Activated CD4-positive, alpha-beta T cell treated with anti-CD3 and anti-CD28 coated beads, Interleukin-2, amount 10 ng/mL, durations not matched to agents 24 days and 14 days (primary cell): ENCODE measurements at regions of chr1 and their contacts with region 1.

Region 1: DNA sequence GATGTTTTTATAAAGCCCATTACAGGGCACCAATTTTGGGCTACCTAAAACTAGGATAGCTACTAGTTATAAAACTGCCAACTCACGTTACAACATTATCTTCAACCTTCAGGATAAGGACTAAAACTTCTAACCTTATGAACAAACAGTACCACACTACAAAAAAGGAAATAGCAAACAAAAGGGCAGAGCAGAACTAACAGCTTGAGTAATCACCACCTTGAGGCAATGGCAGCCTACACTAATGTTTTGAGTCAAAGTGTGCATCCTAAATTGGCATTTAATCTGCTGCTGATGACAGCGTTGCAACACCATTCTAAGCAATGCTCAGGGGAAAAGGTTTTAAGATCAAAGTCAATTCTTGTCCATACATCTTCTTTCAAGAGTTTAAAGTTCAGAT is 27.2 kb downstream of the PTP4A2 start:
- DNase-seq: no peak
- H3K4me3 Mint-ChIP-seq: peak overlapping the region; percentile 1
- H3K27ac Mint-ChIP-seq: peak overlapping the region; percentile 59
- H3K4me1 Mint-ChIP-seq: peaks cover 54% of the 10 kb centered on the region
- H3K27me3 Mint-ChIP-seq: no peaks in the 10 kb centered on the region

Region 2: GRCh38 chr1:31872658-31873636 is 38.0 kb before region 1 on chr1:
- intact Hi-C with region 1: loop called (anchors 5 kb)
- DNase-seq: peak; percentile 67
- H3K4me3 Mint-ChIP-seq: peak overlapping the region; percentile 19
- H3K27ac Mint-ChIP-seq: peak overlapping the region; percentile 77
- H3K4me1 Mint-ChIP-seq: peaks cover 21% of the 10 kb centered on the region
- H3K27me3 Mint-ChIP-seq: no peaks in the 10 kb centered on the region

Region 3: GRCh38 chr1:31891280-31891679 is 19.7 kb before region 1 on chr1:
- intact Hi-C with region 1: loop called (anchors 1 kb)
- DNase-seq: peak; percentile 71
- H3K4me3 Mint-ChIP-seq: peak overlapping the region; percentile 7
- H3K27ac Mint-ChIP-seq: peak overlapping the region; percentile 75
- H3K4me1 Mint-ChIP-seq: peaks cover 23% of the 10 kb centered on the region
- H3K27me3 Mint-ChIP-seq: no peaks in the 10 kb centered on the region

Region 4: GRCh38 chr1:31931593-31932225 is 20.8 kb after region 1 on chr1:
- intact Hi-C with region 1: loop called (anchors 1 kb)
- DNase-seq: no peak
- H3K4me3 Mint-ChIP-seq: peak overlapping the region; percentile 95
- H3K27ac Mint-ChIP-seq: peak overlapping the region; percentile 93
- H3K4me1 Mint-ChIP-seq: peaks cover 76% of the 10 kb centered on the region
- H3K27me3 Mint-ChIP-seq: no peaks in the 10 kb centered on the region

Region 5: GRCh38 chr1:31955917-31956736 is 45.2 kb after region 1 on chr1:
- intact Hi-C with region 1: loop called (anchors 1 kb)
- DNase-seq: peak; percentile 95
- H3K4me3 Mint-ChIP-seq: peak overlapping the region; percentile 71
- H3K27ac Mint-ChIP-seq: peak overlapping the region; percentile 93
- H3K4me1 Mint-ChIP-seq: peaks cover 74% of the 10 kb centered on the region
- H3K27me3 Mint-ChIP-seq: no peaks in the 10 kb centered on the region